Activated naive CD4-positive, alpha-beta T cell treated with anti-CD3 and anti-CD28 coated beads for 36 hours (primary cell): ENCODE measurements at regions of chr3 and their contacts with region 1.

Region 1: GRCh38 chr3:56988458-56989168 is 71.9 kb upstream of the SPATA12 start:
- DNase-seq: peak; percentile 82
- H3K4me3 Mint-ChIP-seq: no peak overlapping the region
- H3K27ac Mint-ChIP-seq: no peak overlapping the region
- H3K4me1 Mint-ChIP-seq: peaks cover 16% of the 10 kb centered on the region
- H3K27me3 Mint-ChIP-seq: peaks cover 5% of the 10 kb centered on the region

Region 2: GRCh38 chr3:56556908-56557830 is 431.4 kb before region 1 on chr3 and contains the start of gene CCDC66:
- CTCF ChIA-PET with region 1: no interaction called
- intact Hi-C with region 1: loop called (anchors 2 kb)
- DNase-seq: peak; percentile 97
- H3K4me3 Mint-ChIP-seq: peak within 1 kb of the TSS; percentile 94
- H3K27ac Mint-ChIP-seq: peak within 1 kb of the TSS; percentile 97
- H3K4me1 Mint-ChIP-seq: peaks cover 26% of the 10 kb centered on the region
- H3K27me3 Mint-ChIP-seq: no peaks in the 10 kb centered on the region
- total RNA-seq, gene CCDC66: 29.0 to 29.3 TPM

Region 3: DNA sequence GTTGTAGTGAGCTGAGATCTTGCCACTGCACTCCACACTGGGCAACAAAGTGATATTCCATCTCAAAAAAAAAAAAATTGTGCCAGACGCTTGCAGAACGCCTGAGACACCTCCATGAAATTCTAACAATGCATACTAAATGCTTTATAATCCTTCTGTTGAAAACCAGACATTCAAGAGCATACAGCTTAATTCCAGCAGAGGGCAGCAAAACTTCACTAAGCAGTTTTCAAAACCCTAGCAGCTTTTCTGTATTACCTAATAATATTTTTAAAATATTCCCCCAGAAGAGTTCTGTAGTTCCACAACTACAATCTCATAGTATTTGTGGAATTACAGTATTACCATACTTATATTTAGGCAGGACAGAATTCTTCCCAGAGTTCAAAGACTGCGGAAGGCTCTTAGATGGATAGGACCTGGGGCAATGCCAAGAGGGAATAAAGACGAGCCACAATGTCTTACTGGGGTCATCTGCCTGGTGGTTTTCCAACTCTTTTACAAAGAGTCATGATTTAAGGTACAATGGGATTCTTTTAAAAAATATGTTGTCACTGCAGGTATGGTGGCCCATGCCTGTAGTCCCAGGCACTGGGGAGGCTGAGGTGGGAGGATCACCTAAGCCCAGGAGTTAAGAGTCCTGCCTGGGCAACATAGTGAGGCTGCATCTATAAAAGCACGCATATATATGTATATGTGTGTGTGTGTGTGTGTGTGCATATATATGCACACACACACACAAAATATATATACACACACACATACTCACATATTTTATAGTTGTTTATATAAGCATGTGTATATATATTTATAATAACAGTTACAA is 285.9 kb before region 1 on chr3:
- CTCF ChIA-PET with region 1: interaction called, 187 read pairs
- intact Hi-C with region 1: loop called (anchors 1 kb)
- DNase-seq: peak; percentile 70
- H3K4me3 Mint-ChIP-seq: no peak overlapping the region
- H3K27ac Mint-ChIP-seq: no peak overlapping the region
- H3K4me1 Mint-ChIP-seq: peaks cover 17% of the 10 kb centered on the region
- H3K27me3 Mint-ChIP-seq: no peaks in the 10 kb centered on the region

Region 4: GRCh38 chr3:56753206-56753820 is 235.3 kb before region 1 on chr3:
- CTCF ChIA-PET with region 1: interaction called, 29 read pairs
- intact Hi-C with region 1: no loop called
- DNase-seq: peak; percentile 73
- H3K4me3 Mint-ChIP-seq: no peak overlapping the region
- H3K27ac Mint-ChIP-seq: peak overlapping the region; percentile 44
- H3K4me1 Mint-ChIP-seq: peaks cover 56% of the 10 kb centered on the region
- H3K27me3 Mint-ChIP-seq: no peaks in the 10 kb centered on the region

Region 5: DNA sequence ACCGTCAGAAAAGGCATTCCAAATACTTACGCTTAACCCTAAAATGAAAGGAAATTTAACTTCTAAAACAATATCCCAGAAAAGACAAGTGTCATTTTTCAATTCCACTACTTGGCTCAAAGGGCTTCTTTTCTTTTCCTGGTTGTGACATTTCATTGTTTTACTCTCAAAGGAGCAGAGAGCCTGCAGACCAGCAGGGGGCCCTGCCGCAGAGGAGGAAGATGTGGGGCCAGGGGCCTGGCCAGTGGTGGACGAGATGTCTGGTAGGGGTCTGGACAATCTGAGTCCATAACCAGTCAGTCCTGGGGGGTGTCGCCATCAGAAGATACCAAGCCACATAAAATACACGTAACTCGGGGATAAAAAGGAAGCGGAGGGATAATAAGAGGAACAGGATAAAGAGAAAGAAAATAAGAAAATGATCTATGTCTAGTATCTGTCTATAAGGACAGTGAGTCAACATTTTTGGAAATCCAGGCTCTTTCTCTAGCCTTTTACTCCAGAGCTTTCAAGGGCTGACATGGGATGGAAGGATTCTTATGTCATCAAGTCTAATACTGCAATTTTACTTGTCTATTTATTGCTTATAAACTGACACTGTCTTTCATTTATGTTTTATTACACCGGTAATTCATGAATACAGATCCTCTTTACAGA is 132.6 kb before region 1 on chr3:
- CTCF ChIA-PET with region 1: interaction called, 10 read pairs
- intact Hi-C with region 1: loop called (anchors 1 kb)
- DNase-seq: peak; percentile 62
- H3K4me3 Mint-ChIP-seq: no peak overlapping the region
- H3K27ac Mint-ChIP-seq: no peak overlapping the region
- H3K4me1 Mint-ChIP-seq: peaks cover 45% of the 10 kb centered on the region
- H3K27me3 Mint-ChIP-seq: no peaks in the 10 kb centered on the region